ENCODE measurements at regions of chr17 and their contacts with region 1.

Region 1: GRCh38 chr17:5237541-5238016 is 2.9 kb upstream of the SCIMP start:
- DNase-seq: peak; percentile 81
- ATAC-seq: peak; percentile 72
- H3K4me3 Mint-ChIP-seq: no peak overlapping the region
- H3K27ac Mint-ChIP-seq: peak overlapping the region; percentile 68
- H3K4me1 Mint-ChIP-seq: peaks cover 41% of the 10 kb centered on the region
- H3K27me3 Mint-ChIP-seq: no peaks in the 10 kb centered on the region
- CTCF ChIP-seq: peak; percentile 63

Region 2: GRCh38 chr17:4852567-4853207 is 384.9 kb before region 1 on chr17:
- CTCF ChIA-PET with region 1: no interaction called
- POLR2A ChIA-PET with region 1: no interaction called
- intact Hi-C with region 1: no loop called
- DNase-seq: peak; percentile 17
- ATAC-seq: no peak
- H3K4me3 Mint-ChIP-seq: no peak overlapping the region
- H3K27ac Mint-ChIP-seq: peak overlapping the region; percentile 21
- H3K4me1 Mint-ChIP-seq: peaks cover 21% of the 10 kb centered on the region
- H3K27me3 Mint-ChIP-seq: no peaks in the 10 kb centered on the region
- CTCF ChIP-seq: no peak

Region 3: GRCh38 chr17:5191541-5192417 is 45.8 kb before region 1 on chr17 and contains the start of gene ZNF594:
- CTCF ChIA-PET with region 1: interaction called, 27 read pairs
- POLR2A ChIA-PET with region 1: no interaction called
- intact Hi-C with region 1: loop called (anchors 5 kb)
- DNase-seq: peak; percentile 98
- ATAC-seq: peak; percentile 100
- H3K4me3 Mint-ChIP-seq: peak within 1 kb of the TSS; percentile 94
- H3K27ac Mint-ChIP-seq: peak within 1 kb of the TSS; percentile 94
- H3K4me1 Mint-ChIP-seq: peaks cover 31% of the 10 kb centered on the region
- H3K27me3 Mint-ChIP-seq: no peaks in the 10 kb centered on the region
- CTCF ChIP-seq: peak; percentile 78
- total RNA-seq, gene ZNF594: 7.7 to 8.7 TPM

Region 4: GRCh38 chr17:5198472-5198871 is 39.1 kb before region 1 on chr17:
- CTCF ChIA-PET with region 1: interaction called, 27 read pairs
- POLR2A ChIA-PET with region 1: no interaction called
- intact Hi-C with region 1: loop called (anchors 5 kb)
- DNase-seq: peak; percentile 8
- ATAC-seq: peak; percentile 55
- H3K4me3 Mint-ChIP-seq: no peak overlapping the region
- H3K27ac Mint-ChIP-seq: peak overlapping the region; percentile 46
- H3K4me1 Mint-ChIP-seq: peaks cover 13% of the 10 kb centered on the region
- H3K27me3 Mint-ChIP-seq: no peaks in the 10 kb centered on the region
- CTCF ChIP-seq: no peak

Region 5: DNA sequence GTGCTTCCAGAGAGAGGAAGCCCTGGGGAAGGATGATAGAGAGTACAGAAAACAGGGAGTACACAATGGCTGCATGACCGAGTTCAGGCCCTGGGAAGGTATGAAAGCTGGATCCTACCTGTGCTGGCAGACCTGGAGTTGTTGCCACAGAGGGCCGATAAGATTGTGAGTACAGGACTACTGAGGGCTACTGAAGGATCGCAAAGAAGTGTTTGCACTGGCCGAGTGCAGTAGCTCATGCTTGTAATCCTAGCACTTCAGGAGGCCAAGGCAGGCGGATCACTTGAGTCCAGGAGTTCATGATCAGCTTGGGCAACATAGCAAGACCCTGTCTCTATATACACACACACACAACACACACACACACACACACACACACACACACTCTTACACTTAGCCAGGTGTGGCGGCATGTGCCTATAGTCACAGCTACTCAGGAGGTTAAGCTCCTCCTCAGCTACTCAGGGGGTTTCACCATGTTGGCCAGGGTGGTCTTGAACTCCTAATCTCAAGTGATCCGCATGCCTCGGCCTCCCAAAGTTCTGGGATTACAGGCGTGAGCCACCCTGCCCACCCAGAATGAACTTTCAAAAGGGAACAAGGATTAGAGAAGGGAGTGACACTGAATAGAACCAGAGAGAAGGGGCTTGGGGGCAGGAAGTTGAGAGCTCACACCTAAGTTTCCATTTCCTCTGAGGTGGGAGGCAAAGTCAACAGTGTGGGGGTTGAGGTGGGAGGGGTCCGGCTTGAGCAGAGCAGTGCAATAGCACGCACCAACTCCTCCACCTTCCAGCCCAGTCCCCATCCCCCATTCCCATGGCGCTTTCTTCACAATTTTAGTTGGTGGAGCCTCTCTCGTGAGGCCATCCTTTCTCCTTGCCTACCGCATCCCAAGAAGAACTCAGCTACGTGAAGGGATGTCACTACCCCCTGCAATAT is 10.4 kb before region 1 on chr17:
- CTCF ChIA-PET with region 1: interaction called, 10 read pairs
- POLR2A ChIA-PET with region 1: interaction called, 8 read pairs
- intact Hi-C with region 1: no loop called
- DNase-seq: peak; percentile 77
- ATAC-seq: peak; percentile 94
- H3K4me3 Mint-ChIP-seq: peak overlapping the region; percentile 24
- H3K27ac Mint-ChIP-seq: peak overlapping the region; percentile 95
- H3K4me1 Mint-ChIP-seq: peaks cover 36% of the 10 kb centered on the region
- H3K27me3 Mint-ChIP-seq: no peaks in the 10 kb centered on the region
- CTCF ChIP-seq: no peak

Region 6: GRCh38 chr17:5249615-5250014 is 12.0 kb after region 1 on chr17:
- CTCF ChIA-PET with region 1: interaction called, 12 read pairs
- POLR2A ChIA-PET with region 1: no interaction called
- intact Hi-C with region 1: no loop called
- DNase-seq: peak; percentile 83
- ATAC-seq: peak; percentile 93
- H3K4me3 Mint-ChIP-seq: no peak overlapping the region
- H3K27ac Mint-ChIP-seq: no peak overlapping the region
- H3K4me1 Mint-ChIP-seq: peaks cover 10% of the 10 kb centered on the region
- H3K27me3 Mint-ChIP-seq: no peaks in the 10 kb centered on the region
- CTCF ChIP-seq: peak; percentile 56

Region 7: DNA sequence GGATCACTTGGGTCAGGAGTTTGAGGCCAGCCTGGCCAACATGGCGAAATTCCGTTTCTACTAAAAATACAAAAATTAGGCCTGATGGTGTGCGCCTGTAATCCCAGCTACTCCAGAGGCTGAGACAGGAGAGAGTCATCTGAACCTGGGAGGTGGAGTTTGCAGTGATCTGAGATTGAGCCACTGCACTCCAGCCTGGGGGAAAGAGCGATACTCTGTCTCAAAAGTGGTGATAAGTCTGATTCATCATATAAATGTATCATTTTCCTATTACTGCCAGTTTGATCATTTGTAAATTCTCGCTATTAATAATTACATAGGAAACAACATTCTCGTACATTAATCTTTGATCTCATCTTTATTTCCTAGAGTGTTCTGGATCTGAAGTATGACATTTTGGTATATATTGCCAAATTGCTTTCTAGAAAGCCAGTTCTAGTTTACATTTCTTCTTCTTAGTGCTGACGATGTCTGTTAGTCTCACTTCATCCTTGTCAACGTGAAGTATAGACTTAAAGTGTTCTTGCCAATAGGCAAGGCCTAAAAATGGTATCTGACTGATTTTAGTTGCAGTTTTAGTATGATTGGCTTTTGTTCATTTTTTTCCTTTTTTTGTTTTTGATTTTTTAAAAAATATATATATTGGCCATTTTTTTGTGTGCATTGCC is 54.2 kb after region 1 on chr17:
- CTCF ChIA-PET with region 1: no interaction called
- POLR2A ChIA-PET with region 1: no interaction called
- intact Hi-C with region 1: no loop called
- DNase-seq: no peak
- ATAC-seq: no peak
- H3K4me3 Mint-ChIP-seq: no peak overlapping the region
- H3K27ac Mint-ChIP-seq: peak overlapping the region; percentile 13
- H3K4me1 Mint-ChIP-seq: peaks cover 38% of the 10 kb centered on the region
- H3K27me3 Mint-ChIP-seq: no peaks in the 10 kb centered on the region
- CTCF ChIP-seq: no peak